ENCODE measurements at regions of chr20 and their contacts with region 1.

Region 1: DNA sequence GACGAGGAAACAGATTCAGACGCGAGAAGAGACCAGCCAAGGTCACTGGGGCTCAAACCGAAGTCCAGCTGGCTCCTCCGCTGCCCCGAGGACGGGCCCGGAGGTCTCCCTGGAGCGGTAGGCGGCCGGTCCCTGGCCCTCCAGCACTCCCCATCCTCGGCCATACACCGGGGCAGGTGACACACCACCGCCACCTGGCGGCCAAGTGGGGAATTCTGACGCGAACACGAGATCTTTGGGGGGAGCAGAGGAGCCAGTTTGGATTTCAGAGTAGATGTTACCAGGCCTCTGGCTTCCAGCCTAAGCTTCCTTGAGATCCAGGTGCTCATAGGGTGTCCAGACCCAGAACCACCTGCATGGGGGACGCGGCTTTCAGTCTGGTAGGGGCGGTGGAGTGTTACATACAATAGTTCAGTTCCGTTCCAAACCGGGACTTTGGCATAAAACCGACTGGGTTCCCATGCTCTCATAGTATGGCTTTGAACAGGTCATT is 16.1 kb downstream of the BPIFB1 start:
- DNase-seq: peak; percentile 13 to 61 (median 29)
- H3K4me3 ChIP-seq: no peak overlapping the region
- H3K27ac ChIP-seq: no peak overlapping the region
- H3K4me1 ChIP-seq: no peaks in the 10 kb centered on the region
- H3K27me3 ChIP-seq: no peaks in the 10 kb centered on the region
- CTCF ChIP-seq: no peak
- EP300 ChIP-seq: no peak
- POLR2A ChIP-seq: no peak

Region 2: DNA sequence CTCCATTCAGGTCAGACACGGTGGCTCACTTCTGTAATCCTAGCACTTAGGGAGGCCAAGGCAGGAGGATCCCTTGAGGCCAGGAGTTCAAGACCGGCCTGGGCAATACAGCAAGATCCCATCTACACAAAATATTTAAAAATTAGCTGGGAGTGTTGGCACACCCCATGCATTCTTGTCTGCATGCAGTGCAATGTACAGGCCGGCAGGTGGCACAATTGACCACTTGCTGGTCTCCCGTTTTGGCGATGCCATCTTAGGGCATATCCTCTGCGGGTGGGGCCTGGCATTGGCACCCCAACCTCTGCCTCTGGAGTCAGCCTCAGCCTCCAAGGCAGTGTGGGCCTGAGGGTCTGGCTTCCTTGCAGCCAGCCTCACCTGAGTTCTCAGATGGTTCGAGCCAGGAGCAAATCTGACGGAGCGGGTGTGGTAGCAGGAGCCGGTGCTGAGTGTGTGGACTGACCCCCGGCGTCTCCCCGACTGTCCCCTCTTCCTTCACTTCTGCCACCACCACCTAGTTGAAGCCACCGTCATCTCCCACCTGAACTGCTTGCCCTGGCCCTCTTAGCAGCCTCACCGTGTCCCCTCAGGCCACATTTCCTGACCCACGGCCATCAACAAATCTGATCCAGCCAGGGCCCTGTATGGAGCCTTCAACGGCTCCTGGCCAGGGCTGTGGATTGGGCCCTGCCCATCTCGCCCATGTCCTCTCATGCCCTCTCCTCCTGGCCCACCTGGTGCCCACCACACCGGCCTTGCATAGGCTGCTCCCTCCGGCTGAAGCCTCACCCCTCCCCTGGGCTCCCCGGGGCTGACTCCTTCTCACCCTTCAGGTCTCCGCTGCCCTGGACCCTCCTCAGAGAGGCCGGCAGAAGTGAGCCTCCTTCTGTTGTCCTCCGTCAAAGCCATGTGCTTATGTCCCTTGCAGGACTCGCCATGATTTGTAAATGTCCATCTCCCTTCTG is 396.4 kb before region 1 on chr20:
- intact Hi-C with region 1: loop called in 1 of 4 experiments (anchors 10 kb)
- DNase-seq: peak in 2 of 5 donors; percentile 23 to 48
- H3K4me3 ChIP-seq: no peak overlapping the region
- H3K27ac ChIP-seq: no peak overlapping the region
- H3K4me1 ChIP-seq: no peaks in the 10 kb centered on the region
- H3K27me3 ChIP-seq: no peaks in the 10 kb centered on the region
- CTCF ChIP-seq: peak in 2 of 3 donors; percentile 14 to 32
- EP300 ChIP-seq: no peak
- POLR2A ChIP-seq: no peak

Region 3: DNA sequence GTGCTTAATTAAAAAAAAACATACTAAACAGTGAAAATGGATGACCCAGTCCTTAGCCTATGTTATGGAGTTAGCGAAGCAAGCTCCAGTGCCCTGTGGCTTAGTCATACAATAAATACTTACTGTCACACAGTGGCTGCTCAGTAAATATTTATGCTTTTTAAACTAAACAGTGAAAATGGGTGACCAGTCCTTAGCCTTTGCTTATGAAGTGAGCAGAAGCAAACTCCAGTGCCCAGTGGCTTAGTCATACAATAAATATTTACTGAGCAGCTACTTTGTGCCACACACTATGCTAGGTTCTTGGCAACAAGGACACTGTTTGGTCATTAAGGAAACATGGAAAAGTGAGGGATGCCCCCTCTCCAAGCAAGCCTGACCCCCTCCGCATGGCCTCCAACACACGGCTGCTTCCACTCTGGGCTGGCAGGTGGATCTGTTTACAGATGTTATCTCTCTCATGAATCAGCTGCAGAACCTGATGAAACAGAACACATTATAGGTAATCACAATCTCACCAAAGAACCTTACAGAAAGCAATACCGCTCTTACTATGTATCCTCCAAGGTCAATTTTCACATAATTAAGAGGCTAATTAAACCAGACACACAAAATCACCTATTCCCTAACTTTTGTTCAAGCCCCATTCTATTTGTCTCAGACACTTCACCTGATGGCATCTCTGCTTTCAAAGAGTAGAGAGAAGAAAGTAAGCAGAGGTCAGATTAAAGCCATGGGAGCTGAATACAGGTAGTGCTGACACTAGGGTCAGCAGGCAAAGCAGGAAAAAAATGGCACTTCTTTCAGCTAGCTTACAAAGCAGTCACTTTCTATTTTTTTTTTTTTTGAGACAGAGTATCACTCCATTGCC is 74.8 kb after region 1 on chr20:
- intact Hi-C with region 1: no loop called
- DNase-seq: no peak
- H3K4me3 ChIP-seq: no peak overlapping the region
- H3K27ac ChIP-seq: no peak overlapping the region
- H3K4me1 ChIP-seq: no peaks in the 10 kb centered on the region
- H3K27me3 ChIP-seq: no peaks in the 10 kb centered on the region
- CTCF ChIP-seq: no peak
- EP300 ChIP-seq: no peak
- POLR2A ChIP-seq: no peak

Measured in ovary (tissue), 10 donors.